Activated B cell treated with CpG ODN at 0.5 μM for 24 hours (primary cell): ENCODE measurements at regions of chr4 and their contacts with region 1.

Region 1: DNA sequence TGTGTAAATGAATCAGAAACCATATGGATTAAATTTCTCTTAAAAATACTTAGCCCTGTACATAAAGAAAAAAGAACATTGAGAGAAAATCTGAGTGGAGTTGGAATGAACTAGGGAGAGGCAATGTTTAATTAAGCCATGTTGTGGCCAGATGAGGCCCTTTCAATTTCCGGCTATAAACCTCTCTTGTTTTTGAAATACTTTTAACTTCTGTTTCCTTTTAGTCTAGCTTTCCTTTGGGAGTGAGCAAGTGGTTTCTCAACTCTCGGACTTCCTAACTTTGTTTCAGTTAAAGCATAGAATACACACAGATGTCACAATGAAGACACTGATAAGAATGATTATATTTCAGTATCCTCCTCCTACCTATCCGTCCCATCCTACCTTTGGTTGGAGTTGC is 197.2 kb downstream of the ARHGAP24 start:
- DNase-seq: no peak
- ATAC-seq: no peak
- H3K4me3 Mint-ChIP-seq: peak overlapping the region; percentile 17
- H3K27ac Mint-ChIP-seq: peak overlapping the region; percentile 46
- H3K4me1 Mint-ChIP-seq: peaks cover 79% of the 10 kb centered on the region
- H3K27me3 Mint-ChIP-seq: no peaks in the 10 kb centered on the region
- CTCF ChIP-seq: no peak

Region 2: GRCh38 chr4:85707611-85708010 is 35.5 kb after region 1 on chr4:
- CTCF ChIA-PET with region 1: no interaction called
- POLR2A ChIA-PET with region 1: no interaction called
- intact Hi-C with region 1: loop called (anchors 5 kb)
- DNase-seq: no peak
- ATAC-seq: peak; percentile 66
- H3K4me3 Mint-ChIP-seq: peak overlapping the region; percentile 59
- H3K27ac Mint-ChIP-seq: peak overlapping the region; percentile 84
- H3K4me1 Mint-ChIP-seq: peaks cover 66% of the 10 kb centered on the region
- H3K27me3 Mint-ChIP-seq: no peaks in the 10 kb centered on the region
- CTCF ChIP-seq: no peak